ENCODE measurements at regions of chr6 and their contacts with region 1.

Region 1: DNA sequence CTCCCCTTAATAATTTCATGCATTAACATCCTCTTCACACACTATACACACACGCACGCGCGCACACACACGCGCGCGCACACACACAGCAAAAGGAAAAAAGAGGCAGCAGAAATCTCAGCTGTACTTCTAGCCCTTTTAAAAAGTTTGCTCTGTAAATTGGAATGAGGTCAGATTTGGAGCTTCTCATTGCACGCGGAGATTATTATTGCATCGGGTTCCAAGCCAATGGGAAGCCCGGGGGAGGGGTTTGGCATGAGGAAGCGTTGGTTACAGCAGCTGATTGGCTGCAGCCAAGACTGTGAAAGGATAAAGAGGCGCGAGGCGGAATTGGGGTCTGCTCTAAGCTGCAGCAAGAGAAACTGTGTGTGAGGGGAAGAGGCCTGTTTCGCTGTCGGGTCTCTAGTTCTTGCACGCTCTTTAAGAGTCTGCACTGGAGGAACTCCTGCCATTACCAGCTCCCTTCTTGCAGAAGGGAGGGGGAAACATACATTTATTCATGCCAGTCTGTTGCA is at the start of gene SOX4:
- DNase-seq: peak; percentile 99
- H3K4me3 Mint-ChIP-seq: no peak within 1 kb of the TSS
- H3K27ac Mint-ChIP-seq: no peak within 1 kb of the TSS
- H3K4me1 Mint-ChIP-seq: peaks cover 2% of the 10 kb centered on the region
- H3K27me3 Mint-ChIP-seq: no peaks in the 10 kb centered on the region
- CTCF ChIP-seq: no peak
- total RNA-seq, gene SOX4: 109 and 120 TPM in 2 replicates

Region 2: DNA sequence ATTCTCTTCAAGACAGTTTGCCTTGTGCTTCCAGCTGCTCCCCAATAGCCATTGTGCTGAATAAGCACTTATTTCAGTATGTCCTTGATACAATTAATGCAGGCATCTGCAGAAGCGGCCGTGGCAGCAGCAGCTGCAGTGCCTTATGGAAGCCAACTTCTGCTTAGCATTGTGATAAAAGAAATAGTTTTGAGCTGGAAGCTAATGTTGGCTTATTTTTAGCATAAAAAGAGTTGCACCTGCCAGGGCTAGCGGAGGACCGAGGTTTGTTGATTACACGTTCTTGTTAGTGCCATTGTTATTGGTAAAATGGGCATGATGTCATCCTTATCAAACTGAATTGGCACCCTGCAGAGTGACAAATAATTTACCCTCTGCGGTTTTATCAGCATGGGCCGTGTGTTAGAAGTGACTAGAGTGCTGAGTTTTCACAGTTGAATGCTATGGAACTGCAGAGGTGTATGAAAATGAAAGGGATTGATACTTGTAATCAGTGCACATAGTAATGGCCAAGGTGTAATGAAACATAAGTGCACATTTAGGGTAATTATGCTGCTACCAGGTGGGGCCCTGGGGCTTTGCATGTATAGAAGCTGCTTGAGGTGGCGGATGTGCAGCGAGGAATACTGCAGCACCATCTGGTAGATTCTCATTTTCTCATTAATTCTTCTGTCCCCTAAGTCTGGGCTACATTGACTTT is 724.9 kb before region 1 on chr6:
- CTCF ChIA-PET with region 1: interaction called, 10 read pairs
- intact Hi-C with region 1: no loop called
- DNase-seq: no peak
- H3K4me3 Mint-ChIP-seq: no peak overlapping the region
- H3K27ac Mint-ChIP-seq: no peak overlapping the region
- H3K4me1 Mint-ChIP-seq: peaks cover 57% of the 10 kb centered on the region
- H3K27me3 Mint-ChIP-seq: no peaks in the 10 kb centered on the region
- CTCF ChIP-seq: no peak

Region 3: GRCh38 chr6:21331235-21331634 is 262.2 kb before region 1 on chr6:
- CTCF ChIA-PET with region 1: no interaction called
- intact Hi-C with region 1: loop called (anchors 5 kb)
- DNase-seq: no peak
- H3K4me3 Mint-ChIP-seq: no peak overlapping the region
- H3K27ac Mint-ChIP-seq: no peak overlapping the region
- H3K4me1 Mint-ChIP-seq: peaks cover 8% of the 10 kb centered on the region
- H3K27me3 Mint-ChIP-seq: no peaks in the 10 kb centered on the region
- CTCF ChIP-seq: no peak

Region 4: DNA sequence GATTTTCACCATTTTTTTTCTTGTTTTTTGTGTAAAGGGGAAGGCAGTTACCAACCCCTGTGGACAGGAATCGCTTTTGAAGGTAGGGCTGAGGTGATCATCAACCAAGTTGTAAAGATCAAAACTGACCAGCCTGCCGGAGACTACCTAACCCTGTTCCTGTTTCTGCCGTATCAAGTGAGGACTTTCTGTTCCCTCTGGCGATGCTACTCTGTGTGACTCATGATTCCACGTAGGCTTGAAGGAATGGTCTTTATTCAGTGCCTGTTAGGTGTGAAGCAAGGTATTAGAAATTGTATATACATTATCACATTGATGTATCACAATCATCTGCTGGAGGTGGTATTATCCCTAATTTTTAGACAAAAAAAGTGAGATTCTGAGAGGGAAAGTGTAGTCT is 161.4 kb after region 1 on chr6:
- CTCF ChIA-PET with region 1: no interaction called
- intact Hi-C with region 1: loop called (anchors 5 kb)
- DNase-seq: peak; percentile 72
- H3K4me3 Mint-ChIP-seq: no peak overlapping the region
- H3K27ac Mint-ChIP-seq: peak overlapping the region; percentile 55
- H3K4me1 Mint-ChIP-seq: peaks cover 68% of the 10 kb centered on the region
- H3K27me3 Mint-ChIP-seq: no peaks in the 10 kb centered on the region
- CTCF ChIP-seq: no peak

Region 5: DNA sequence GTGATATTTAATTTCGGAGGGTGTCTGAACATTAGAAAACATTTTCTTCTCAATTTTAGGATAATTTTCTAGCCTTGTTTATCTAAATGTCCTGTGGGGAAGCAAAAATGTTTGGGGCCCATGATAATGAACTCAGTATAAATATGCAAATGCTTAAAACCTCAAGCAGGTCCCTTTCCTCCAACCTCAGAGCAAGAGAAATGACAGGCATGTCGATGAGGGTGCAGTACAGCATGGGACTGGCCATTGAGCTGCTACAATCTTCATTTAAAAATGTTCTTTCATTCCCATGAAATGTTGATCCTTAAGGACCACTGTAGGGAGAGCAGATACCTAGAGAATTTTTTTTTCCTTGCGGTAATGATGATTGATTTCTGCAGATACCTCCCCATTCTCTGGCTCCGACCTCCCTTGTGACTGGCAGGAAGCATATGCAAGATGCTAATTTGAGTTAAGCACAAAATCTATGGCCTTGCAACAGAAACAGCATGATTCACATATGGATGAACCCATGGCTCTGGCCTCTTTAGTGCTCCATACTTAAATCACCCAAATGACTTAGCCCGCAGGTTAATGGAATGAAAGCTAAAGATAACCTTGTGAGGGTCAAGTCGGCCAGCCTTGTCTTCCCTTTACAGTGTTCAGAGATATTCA is 243.4 kb after region 1 on chr6:
- CTCF ChIA-PET with region 1: no interaction called
- intact Hi-C with region 1: no loop called
- DNase-seq: no peak
- H3K4me3 Mint-ChIP-seq: no peak overlapping the region
- H3K27ac Mint-ChIP-seq: no peak overlapping the region
- H3K4me1 Mint-ChIP-seq: peaks cover 5% of the 10 kb centered on the region
- H3K27me3 Mint-ChIP-seq: no peaks in the 10 kb centered on the region
- CTCF ChIP-seq: no peak

Region 6: GRCh38 chr6:22036275-22036674 is 442.8 kb after region 1 on chr6:
- CTCF ChIA-PET with region 1: no interaction called
- intact Hi-C with region 1: loop called (anchors 2 kb)
- DNase-seq: peak; percentile 92
- H3K4me3 Mint-ChIP-seq: peak overlapping the region; percentile 43
- H3K27ac Mint-ChIP-seq: peak overlapping the region; percentile 97
- H3K4me1 Mint-ChIP-seq: peaks cover 35% of the 10 kb centered on the region
- H3K27me3 Mint-ChIP-seq: no peaks in the 10 kb centered on the region
- CTCF ChIP-seq: no peak

Region 7: DNA sequence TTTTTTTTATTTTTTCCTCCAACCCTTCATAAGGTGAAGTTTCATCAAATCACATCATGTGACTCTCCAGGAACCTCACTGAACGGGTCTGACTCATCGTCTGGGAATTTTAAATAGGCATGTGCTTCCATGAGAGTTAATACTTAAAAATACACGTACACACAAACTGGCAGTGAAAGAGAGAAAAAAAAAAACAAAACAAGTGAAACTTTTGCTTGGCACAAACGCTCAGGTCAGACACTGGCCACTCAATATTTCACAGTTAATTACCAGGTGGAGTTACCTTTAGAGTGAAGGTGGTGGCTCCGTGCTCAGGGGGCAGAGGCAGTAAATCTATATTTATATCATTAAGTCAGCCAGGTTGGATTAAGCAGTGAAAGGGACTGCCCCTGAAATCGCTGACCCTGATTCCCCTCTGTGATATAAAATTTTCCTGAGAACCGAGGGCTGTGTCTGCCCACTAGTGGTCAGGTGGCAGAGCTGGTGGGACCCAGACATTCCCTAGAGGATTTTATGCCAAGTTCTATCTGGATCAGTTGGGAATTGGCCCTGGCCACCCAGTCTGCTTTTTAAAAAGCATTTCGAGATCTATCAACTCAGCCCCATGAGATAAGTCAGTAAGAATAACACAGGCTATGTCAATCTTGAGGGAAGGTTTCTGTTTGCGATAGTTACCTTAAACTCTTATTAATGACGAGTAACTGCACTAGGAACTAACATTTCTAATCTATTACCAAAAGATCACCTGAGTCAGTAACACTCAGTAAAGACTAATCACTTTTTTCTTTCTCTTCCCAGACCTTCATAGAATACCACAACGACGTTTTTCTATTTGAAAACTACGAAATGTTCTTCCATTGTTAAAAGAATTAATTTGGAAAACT is 1235.0 kb after region 1 on chr6:
- CTCF ChIA-PET with region 1: interaction called, 10 read pairs
- intact Hi-C with region 1: loop called (anchors 1 kb)
- DNase-seq: peak; percentile 88
- H3K4me3 Mint-ChIP-seq: peak overlapping the region; percentile 48
- H3K27ac Mint-ChIP-seq: peak overlapping the region; percentile 82
- H3K4me1 Mint-ChIP-seq: peaks cover 68% of the 10 kb centered on the region
- H3K27me3 Mint-ChIP-seq: no peaks in the 10 kb centered on the region
- CTCF ChIP-seq: peak; percentile 95

Measured in Calu3 (cell line).